CD8-positive, alpha-beta T cell (primary cell): ENCODE measurements at regions of chr4 and their contacts with region 1.

Region 1: GRCh38 chr4:47668810-47669408 is 169.0 kb downstream of the CORIN start:
- DNase-seq: peak in 3 of 9 experiments; percentile 9 to 62 (median 56)
- ATAC-seq: peak; percentile 48
- H3K4me3 ChIP-seq: no peak overlapping the region
- H3K4me3 Mint-ChIP-seq: no peak overlapping the region
- H3K27ac ChIP-seq: no peak overlapping the region
- H3K27ac Mint-ChIP-seq: no peak overlapping the region
- H3K4me1 ChIP-seq: no peaks in the 10 kb centered on the region
- H3K4me1 Mint-ChIP-seq: peaks cover 2% of the 10 kb centered on the region
- H3K27me3 ChIP-seq: no peaks in the 10 kb centered on the region
- H3K27me3 Mint-ChIP-seq: peaks cover 18% of the 10 kb centered on the region
- CTCF ChIP-seq: peak; percentile 62

Region 2: DNA sequence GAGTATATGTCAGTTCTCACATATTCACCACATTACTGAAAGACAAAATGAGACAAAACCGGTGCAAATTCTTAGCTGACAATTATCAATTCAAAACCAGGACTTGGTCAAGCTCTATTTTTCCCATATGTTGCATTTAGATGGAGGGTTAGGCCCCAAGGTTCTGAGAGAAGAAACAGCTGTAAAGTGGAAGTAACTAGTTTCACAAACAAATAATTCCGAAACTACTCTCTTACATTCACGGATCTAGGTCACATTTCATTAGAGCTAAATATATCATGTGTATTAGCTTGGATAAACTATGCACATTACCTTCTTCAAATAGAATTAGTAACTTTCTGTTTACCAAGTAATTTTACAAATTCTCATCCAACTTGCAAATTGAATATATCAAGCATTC is 1275.3 kb before region 1 on chr4:
- CTCF ChIA-PET with region 1: no interaction called
- POLR2A ChIA-PET with region 1: no interaction called
- intact Hi-C with region 1: no loop called
- DNase-seq: no peak
- ATAC-seq: no peak
- H3K4me3 ChIP-seq: no peak overlapping the region
- H3K4me3 Mint-ChIP-seq: no peak overlapping the region
- H3K27ac ChIP-seq: no peak overlapping the region
- H3K27ac Mint-ChIP-seq: no peak overlapping the region
- H3K4me1 ChIP-seq: no peaks in the 10 kb centered on the region
- H3K4me1 Mint-ChIP-seq: peaks cover 16% of the 10 kb centered on the region
- H3K27me3 ChIP-seq: peaks cover 3 to 10% of the 10 kb centered on the region in 2 experiments
- H3K27me3 Mint-ChIP-seq: peaks cover 23% of the 10 kb centered on the region
- CTCF ChIP-seq: no peak

Region 3: GRCh38 chr4:47933840-47934239 is 264.9 kb after region 1 on chr4:
- CTCF ChIA-PET with region 1: interaction called, 34 read pairs
- POLR2A ChIA-PET with region 1: no interaction called
- intact Hi-C with region 1: loop called (anchors 1 kb)
- DNase-seq: peak in 2 of 9 experiments; percentile 60 to 72
- ATAC-seq: peak; percentile 74
- H3K4me3 ChIP-seq: no peak overlapping the region
- H3K4me3 Mint-ChIP-seq: no peak overlapping the region
- H3K27ac ChIP-seq: no peak overlapping the region
- H3K27ac Mint-ChIP-seq: no peak overlapping the region
- H3K4me1 ChIP-seq: no peaks in the 10 kb centered on the region
- H3K4me1 Mint-ChIP-seq: no peaks in the 10 kb centered on the region
- H3K27me3 ChIP-seq: no peaks in the 10 kb centered on the region
- H3K27me3 Mint-ChIP-seq: peaks cover 6% of the 10 kb centered on the region
- CTCF ChIP-seq: peak; percentile 87